Panc1 (cell line): ENCODE measurements at regions of chr1 and their contacts with region 1.

Region 1: DNA sequence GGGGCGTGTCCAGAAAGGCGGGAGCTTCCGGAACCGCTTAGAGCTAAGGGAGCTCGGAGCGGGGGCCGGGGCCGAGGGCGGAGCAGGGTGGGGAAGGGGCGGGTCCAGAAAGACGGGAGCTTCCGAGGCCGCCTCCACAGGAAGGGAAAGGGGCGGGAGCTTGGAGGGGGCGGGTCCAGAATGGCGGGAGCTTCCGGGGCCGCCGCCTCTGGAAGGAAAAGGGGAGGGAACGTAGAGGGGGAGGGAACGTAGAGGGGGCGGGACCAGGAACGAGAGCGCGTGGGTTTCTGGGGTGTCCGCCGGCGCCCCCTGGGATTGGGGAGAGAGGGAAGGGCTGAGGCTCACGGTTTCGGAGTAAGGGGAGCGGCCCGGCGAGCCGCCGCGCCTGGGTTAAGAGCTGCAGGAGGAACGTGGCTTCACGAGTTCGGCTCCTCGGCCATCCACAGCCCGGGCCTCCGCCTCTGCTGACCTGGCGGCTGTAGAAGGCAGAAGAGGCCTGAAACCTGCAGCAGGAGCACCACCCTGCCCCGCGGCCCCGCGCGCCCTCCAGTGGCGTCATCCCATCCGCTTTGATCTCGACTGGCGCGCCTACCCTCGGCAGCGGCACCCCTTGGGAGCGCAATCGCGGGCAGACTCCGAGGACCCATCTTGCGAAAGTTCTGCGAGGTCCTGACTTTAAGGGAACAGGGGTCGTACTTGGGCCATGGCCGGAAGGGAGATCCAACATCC is 22.9 kb upstream of the HPDL start:
- DNase-seq: peak; percentile 75
- ATAC-seq: peak; percentile 97
- H3K4me3 ChIP-seq: peak overlapping the region; percentile 65 to 80
- H3K27ac ChIP-seq: peak overlapping the region; percentile 91
- H3K4me1 ChIP-seq: peaks cover 8% of the 10 kb centered on the region
- H3K27me3 ChIP-seq: no peaks in the 10 kb centered on the region
- CTCF ChIP-seq: peak; percentile 93

Region 2: GRCh38 chr1:45187725-45188124 is 116.0 kb before region 1 on chr1:
- CTCF ChIA-PET with region 1: interaction called, 12 read pairs
- POLR2A ChIA-PET with region 1: no interaction called
- in situ Hi-C with region 1: no loop called
- intact Hi-C with region 1: no loop called
- DNase-seq: no peak
- ATAC-seq: no peak
- H3K4me3 ChIP-seq: no peak overlapping the region
- H3K27ac ChIP-seq: no peak overlapping the region
- H3K4me1 ChIP-seq: no peaks in the 10 kb centered on the region
- H3K27me3 ChIP-seq: no peaks in the 10 kb centered on the region
- CTCF ChIP-seq: no peak

Region 3: DNA sequence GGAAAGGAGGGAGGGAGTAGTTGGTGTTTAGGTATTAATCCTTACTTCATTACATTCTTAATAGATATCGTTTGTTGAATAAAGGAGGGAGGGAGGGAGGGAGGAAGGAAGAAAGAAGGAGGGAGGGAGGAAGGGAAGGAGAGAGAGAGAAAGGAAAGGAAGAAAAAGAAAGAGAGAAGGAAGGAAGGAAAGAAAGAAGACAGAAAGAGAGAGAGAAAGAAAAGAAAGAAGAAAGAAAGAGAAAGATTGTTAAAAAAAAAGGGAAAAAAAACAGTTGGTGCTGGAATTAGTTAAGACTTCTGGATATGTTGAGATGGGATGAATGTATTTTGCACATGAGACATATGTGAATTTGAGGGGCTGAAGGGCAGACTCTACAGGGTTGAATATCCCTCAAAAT is 53.2 kb before region 1 on chr1:
- CTCF ChIA-PET with region 1: no interaction called
- POLR2A ChIA-PET with region 1: no interaction called
- in situ Hi-C with region 1: no loop called
- intact Hi-C with region 1: no loop called
- DNase-seq: no peak
- ATAC-seq: no peak
- H3K4me3 ChIP-seq: no peak overlapping the region
- H3K27ac ChIP-seq: no peak overlapping the region
- H3K4me1 ChIP-seq: no peaks in the 10 kb centered on the region
- H3K27me3 ChIP-seq: no peaks in the 10 kb centered on the region; the same call in 1 of the 2 replicates
- CTCF ChIP-seq: no peak

Region 4: DNA sequence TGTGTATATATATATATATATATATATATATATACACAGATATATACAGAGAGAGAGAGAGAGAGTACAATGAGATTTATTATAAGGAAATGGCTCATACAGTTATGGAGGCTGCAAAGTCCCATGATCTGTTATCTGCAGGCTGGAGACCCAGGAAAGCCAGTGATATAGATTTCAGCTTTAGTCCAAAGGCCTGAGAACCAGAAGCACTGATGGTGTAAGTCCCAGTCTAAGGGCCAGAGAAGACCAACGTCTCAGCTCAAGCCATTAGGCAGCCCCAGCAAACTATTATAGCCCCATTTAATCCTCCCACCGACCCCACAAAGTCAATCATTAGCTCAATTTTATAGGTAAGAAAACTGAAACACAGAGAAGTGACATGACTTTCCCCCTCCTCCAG is 12.0 kb before region 1 on chr1:
- CTCF ChIA-PET with region 1: interaction called, 6 read pairs
- POLR2A ChIA-PET with region 1: interaction called, 14 read pairs
- in situ Hi-C with region 1: no loop called
- intact Hi-C with region 1: no loop called
- DNase-seq: no peak
- ATAC-seq: no peak
- H3K4me3 ChIP-seq: no peak overlapping the region
- H3K27ac ChIP-seq: no peak overlapping the region
- H3K4me1 ChIP-seq: no peaks in the 10 kb centered on the region
- H3K27me3 ChIP-seq: no peaks in the 10 kb centered on the region
- CTCF ChIP-seq: no peak

Region 5: DNA sequence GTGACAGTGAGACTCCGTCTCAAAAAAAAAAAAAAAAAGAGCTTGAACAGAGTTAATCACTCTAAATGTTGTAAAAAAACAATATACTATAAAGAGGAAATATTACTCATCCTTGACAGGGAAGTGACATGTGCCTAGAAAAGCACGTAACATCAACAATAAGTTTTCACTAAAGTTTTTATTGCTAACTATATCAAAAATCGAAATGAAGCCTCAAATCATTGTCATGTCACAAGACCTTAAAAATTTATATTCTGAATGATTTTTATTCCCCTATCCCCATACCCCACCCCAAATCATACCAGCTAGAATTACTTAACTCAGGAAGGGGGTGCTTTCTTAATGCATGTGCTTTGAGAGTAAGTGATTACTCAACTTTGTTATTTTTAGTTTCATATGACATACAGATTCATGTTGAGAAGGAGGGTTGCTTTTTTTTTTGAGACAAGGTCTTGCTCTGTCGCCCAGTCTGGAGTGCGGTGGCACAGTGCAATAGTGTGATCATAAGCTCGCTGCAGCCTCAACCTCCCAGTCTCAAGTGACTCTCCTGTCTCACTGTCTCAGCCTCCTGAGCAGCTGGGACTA is 90.1 kb after region 1 on chr1:
- CTCF ChIA-PET with region 1: no interaction called
- POLR2A ChIA-PET with region 1: interaction called, 10 read pairs
- in situ Hi-C with region 1: no loop called
- intact Hi-C with region 1: no loop called
- DNase-seq: no peak
- ATAC-seq: no peak
- H3K4me3 ChIP-seq: no peak overlapping the region
- H3K27ac ChIP-seq: no peak overlapping the region
- H3K4me1 ChIP-seq: no peaks in the 10 kb centered on the region
- H3K27me3 ChIP-seq: no peaks in the 10 kb centered on the region
- CTCF ChIP-seq: no peak

Region 6: GRCh38 chr1:45583264-45583665 is 279.5 kb after region 1 on chr1:
- CTCF ChIA-PET with region 1: no interaction called
- POLR2A ChIA-PET with region 1: no interaction called
- in situ Hi-C with region 1: no loop called
- intact Hi-C with region 1: no loop called
- DNase-seq: peak; percentile 97
- ATAC-seq: peak; percentile 91
- H3K4me3 ChIP-seq: peak overlapping the region; percentile 89 to 98
- H3K27ac ChIP-seq: peak overlapping the region; percentile 90
- H3K4me1 ChIP-seq: peaks cover 8% of the 10 kb centered on the region; the same call in 1 of the 2 replicates
- H3K27me3 ChIP-seq: no peaks in the 10 kb centered on the region
- CTCF ChIP-seq: no peak